WTC11 (cell line): ENCODE measurements at regions of chr14 and their contacts with region 1.

Region 1: DNA sequence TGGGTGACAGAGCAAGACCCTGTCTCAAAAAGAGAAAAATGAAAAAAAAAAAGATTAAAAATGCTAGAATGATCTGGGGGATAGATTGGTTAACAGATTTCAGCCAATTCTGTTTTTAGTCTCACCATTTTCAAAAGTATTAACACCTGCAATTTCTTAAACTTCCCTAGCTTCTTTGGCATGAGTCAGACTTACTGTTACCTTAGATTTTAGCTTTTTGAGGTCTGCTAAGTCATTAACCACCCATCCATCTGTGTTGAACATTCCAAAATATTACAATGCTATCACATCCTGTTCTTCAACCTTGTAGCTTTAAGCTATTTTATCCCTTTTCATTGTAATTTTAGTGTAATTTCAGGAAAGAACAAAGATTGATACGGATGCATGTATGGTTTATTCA is 59.3 kb downstream of the PPP1R13B start:
- DNase-seq: no peak
- ATAC-seq: no peak
- H3K4me3 Mint-ChIP-seq: no peak overlapping the region
- H3K27ac Mint-ChIP-seq: no peak overlapping the region
- H3K4me1 Mint-ChIP-seq: no peaks in the 10 kb centered on the region
- H3K27me3 Mint-ChIP-seq: no peaks in the 10 kb centered on the region
- CTCF ChIP-seq: no peak

Region 2: DNA sequence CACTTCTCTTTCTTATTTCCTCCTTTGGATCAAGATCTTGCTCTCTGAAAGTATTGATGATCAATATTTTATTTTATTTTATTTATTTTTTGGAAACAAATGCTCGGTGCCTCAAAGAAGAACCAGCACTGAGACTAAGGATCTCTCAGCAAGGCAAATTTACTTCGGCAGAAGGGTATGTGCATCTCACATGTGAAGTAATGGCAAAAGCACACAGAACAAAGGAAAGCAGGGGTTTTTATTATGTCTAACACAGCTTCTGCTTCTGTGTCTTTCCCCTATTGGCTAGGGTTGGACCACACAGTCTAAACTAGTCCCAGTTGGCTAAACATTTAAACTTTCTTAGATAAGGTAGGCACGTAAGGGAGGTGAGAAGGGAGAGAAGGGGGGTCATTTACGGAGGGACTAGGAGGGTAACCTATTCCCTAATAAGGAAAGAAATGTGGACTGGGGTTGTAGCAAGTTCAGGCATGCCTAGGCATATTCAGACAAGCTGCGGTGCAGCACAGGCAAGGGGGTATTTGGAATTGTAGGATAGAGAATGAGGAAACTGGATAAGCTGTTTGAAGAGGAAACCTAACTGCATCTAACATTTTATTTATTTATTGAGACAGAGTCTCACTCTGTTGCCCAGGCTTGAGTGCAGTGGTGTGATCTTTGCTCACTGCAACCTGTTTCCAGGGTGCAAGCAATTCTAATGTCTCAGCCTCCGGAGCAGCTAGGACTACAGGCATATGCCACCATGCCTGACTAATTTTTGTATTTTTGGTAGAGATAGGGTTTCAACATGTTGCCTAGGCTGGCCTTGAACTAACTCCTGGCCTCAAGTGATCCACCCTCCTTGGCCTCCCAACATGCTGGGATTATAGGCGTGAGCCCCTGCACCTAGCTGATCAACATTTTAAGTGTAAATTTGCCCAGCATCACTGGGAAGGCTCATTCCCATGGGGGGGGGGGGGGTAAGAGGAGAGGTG is 544.0 kb before region 1 on chr14:
- CTCF ChIA-PET with region 1: no interaction called
- POLR2A ChIA-PET with region 1: no interaction called
- DNase-seq: no peak
- ATAC-seq: no peak; the same call in 1 of the 2 replicates
- H3K4me3 Mint-ChIP-seq: no peak overlapping the region
- H3K27ac Mint-ChIP-seq: peak overlapping the region; percentile 94
- H3K4me1 Mint-ChIP-seq: peaks cover 17% of the 10 kb centered on the region
- H3K27me3 Mint-ChIP-seq: peaks cover 4% of the 10 kb centered on the region
- CTCF ChIP-seq: no peak

Region 3: DNA sequence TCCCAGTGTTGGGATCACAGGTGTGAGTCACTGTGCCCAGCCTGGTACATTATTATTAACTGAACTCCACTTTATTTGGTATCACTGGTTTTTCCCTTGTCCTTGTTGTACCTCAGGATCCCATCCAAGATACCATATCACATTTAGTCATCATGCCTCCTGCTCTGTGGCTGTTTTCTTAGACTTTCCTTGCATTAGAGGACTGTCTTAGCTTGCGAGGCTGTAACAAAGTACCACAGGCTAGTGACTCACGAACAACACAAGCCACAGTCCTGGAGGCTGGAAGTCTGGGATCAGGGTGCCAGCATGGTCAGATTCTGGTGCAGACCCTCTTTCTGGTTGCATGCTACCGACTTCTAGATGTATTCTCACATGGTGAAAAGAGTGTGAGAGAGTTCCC is 146.9 kb before region 1 on chr14:
- CTCF ChIA-PET with region 1: no interaction called
- POLR2A ChIA-PET with region 1: interaction called, 10 read pairs
- DNase-seq: no peak
- ATAC-seq: no peak
- H3K4me3 Mint-ChIP-seq: no peak overlapping the region
- H3K27ac Mint-ChIP-seq: no peak overlapping the region; the same call in 1 of the 2 replicates
- H3K4me1 Mint-ChIP-seq: no peaks in the 10 kb centered on the region
- H3K27me3 Mint-ChIP-seq: no peaks in the 10 kb centered on the region
- CTCF ChIP-seq: no peak